ENCODE measurements at regions of chr22 and their contacts with region 1.

Region 1: GRCh38 chr22:50507991-50508884 is at the start of gene NCAPH2:
- DNase-seq: peak; percentile 97
- H3K4me3 Mint-ChIP-seq: peak within 1 kb of the TSS; percentile 96
- H3K27ac Mint-ChIP-seq: peak within 1 kb of the TSS; percentile 95
- H3K4me1 Mint-ChIP-seq: peaks cover 24% of the 10 kb centered on the region
- H3K27me3 Mint-ChIP-seq: no peaks in the 10 kb centered on the region
- total RNA-seq, gene NCAPH2: 133 and 134 TPM in 2 replicates

Region 2: DNA sequence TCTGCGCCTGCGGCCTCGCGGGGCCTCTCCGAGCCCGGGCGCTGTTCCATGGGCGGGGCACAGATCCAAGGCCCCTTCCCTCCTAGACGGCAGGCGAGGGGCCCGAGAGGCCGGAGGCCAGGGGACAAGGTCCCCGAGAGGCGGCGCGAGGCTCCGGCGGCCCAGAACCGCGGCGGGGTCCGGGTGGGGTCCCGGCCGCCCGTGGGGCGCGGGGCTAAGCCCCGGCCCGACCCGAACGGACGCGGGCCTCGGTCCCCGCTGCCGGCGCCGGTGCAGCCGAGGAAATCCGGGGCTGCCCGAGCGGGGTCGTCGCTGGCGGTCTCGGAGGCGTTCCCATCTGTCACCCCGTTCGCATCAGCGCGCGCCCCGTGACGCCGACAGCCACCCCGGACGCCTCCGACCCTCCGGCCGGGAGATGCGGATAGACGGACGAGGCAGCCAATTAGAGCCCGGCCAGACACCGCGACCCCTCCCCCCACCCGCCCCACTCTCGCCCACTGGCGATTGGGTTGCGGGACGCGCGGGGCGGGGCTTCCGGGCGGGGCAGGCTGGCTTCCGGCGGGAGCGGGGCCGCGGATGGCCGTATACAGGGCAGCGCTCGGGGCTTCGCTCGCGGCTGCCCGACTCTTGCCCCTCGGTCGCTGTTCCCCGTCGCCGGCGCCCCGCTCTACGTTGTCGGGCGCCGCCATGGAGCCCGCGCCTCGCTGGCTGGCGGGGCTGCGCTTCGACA is 307.6 kb before region 1 on chr22 and contains the start of gene SELENOO:
- intact Hi-C with region 1: loop called (anchors 2 kb)
- DNase-seq: peak; percentile 90
- H3K4me3 Mint-ChIP-seq: peak within 1 kb of the TSS; percentile 88
- H3K27ac Mint-ChIP-seq: peak within 1 kb of the TSS; percentile 63
- H3K4me1 Mint-ChIP-seq: peaks cover 19% of the 10 kb centered on the region
- H3K27me3 Mint-ChIP-seq: no peaks in the 10 kb centered on the region
- total RNA-seq, gene SELENOO: 23.7 and 25.9 TPM in 2 replicates

Region 3: GRCh38 chr22:50469377-50470305 is 38.6 kb before region 1 on chr22:
- intact Hi-C with region 1: loop called (anchors 1 kb)
- DNase-seq: peak; percentile 92
- H3K4me3 Mint-ChIP-seq: peak overlapping the region; percentile 48
- H3K27ac Mint-ChIP-seq: peak overlapping the region; percentile 90
- H3K4me1 Mint-ChIP-seq: peaks cover 53% of the 10 kb centered on the region
- H3K27me3 Mint-ChIP-seq: no peaks in the 10 kb centered on the region

Region 4: GRCh38 chr22:50481440-50482106 is 26.7 kb before region 1 on chr22 and contains the start of gene ADM2:
- intact Hi-C with region 1: loop called (anchors 1 kb)
- DNase-seq: peak; percentile 73
- H3K4me3 Mint-ChIP-seq: peak within 1 kb of the TSS; percentile 83
- H3K27ac Mint-ChIP-seq: no peak within 1 kb of the TSS
- H3K4me1 Mint-ChIP-seq: peaks cover 4% of the 10 kb centered on the region
- H3K27me3 Mint-ChIP-seq: peaks cover 21% of the 10 kb centered on the region
- total RNA-seq, gene ADM2: 4.2 and 4.9 TPM in 2 replicates

Region 5: GRCh38 chr22:50562523-50563412 is 54.5 kb after region 1 on chr22 and contains the start of gene SYCE3:
- intact Hi-C with region 1: loop called (anchors 1 kb)
- DNase-seq: peak; percentile 98
- H3K4me3 Mint-ChIP-seq: peak within 1 kb of the TSS; percentile 88
- H3K27ac Mint-ChIP-seq: peak within 1 kb of the TSS; percentile 77
- H3K4me1 Mint-ChIP-seq: peaks cover 20% of the 10 kb centered on the region
- H3K27me3 Mint-ChIP-seq: peaks cover 9% of the 10 kb centered on the region
- total RNA-seq, gene SYCE3: 0.83 TPM in 1 of 2 replicates, not detected in the other

Region 6: GRCh38 chr22:50576070-50576469 is 67.8 kb after region 1 on chr22:
- intact Hi-C with region 1: no loop called
- DNase-seq: no peak
- H3K4me3 Mint-ChIP-seq: no peak overlapping the region
- H3K27ac Mint-ChIP-seq: no peak overlapping the region
- H3K4me1 Mint-ChIP-seq: peaks cover 8% of the 10 kb centered on the region
- H3K27me3 Mint-ChIP-seq: no peaks in the 10 kb centered on the region

Region 7: GRCh38 chr22:50627642-50628542 is 119.7 kb after region 1 on chr22 and contains the start of gene ARSA:
- intact Hi-C with region 1: loop called (anchors 1 kb)
- DNase-seq: peak; percentile 78
- H3K4me3 Mint-ChIP-seq: peak within 1 kb of the TSS; percentile 91
- H3K27ac Mint-ChIP-seq: peak within 1 kb of the TSS; percentile 52
- H3K4me1 Mint-ChIP-seq: peaks cover 16% of the 10 kb centered on the region
- H3K27me3 Mint-ChIP-seq: peaks cover 2% of the 10 kb centered on the region
- total RNA-seq, gene ARSA: 26.2 and 27.3 TPM in 2 replicates